Activated CD8-positive, alpha-beta T cell treated with anti-CD3 and anti-CD28 coated beads, Interleukin-2, amount 10 ng/mL, durations not matched to agents 7 days and 5 days (primary cell): ENCODE measurements at regions of chr16 and their contacts with region 1.

Region 1: DNA sequence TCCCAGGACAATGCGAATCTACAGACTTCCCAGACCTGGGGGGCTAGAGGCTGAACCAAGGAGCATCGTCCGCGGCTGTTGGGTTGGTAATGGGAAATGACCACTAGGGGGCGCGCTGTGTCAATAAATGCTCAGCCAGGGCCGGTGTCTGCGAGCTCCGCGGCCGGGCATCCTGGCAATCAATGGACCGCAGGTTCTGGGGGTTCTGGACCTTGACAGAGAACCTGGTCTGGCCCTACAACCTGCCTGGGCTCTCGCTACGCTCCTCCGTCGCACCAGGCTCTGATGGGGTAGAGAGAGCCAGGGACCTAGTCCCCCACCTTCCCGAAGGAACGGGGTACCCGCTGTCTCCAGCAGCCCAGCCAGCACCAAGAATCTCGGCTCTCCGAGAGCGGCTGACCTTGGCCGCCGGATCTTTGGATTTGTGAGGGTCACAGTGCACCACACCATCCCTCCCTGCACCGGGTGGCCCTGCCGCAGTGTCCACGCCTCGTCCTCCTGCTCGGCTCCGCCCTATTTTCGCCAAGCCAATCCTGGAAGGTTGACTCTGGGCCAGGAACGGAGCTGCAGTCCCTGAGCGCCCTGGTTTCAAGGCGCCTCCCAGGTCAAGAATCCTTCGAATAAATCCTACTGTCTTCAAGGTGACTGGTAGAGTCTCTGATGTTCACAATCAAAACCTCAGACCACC is 20.4 kb upstream of the BEAN1 start:
- DNase-seq: peak; percentile 93
- ATAC-seq: peak; percentile 94
- H3K4me3 Mint-ChIP-seq: peak overlapping the region; percentile 77
- H3K27ac Mint-ChIP-seq: peak overlapping the region; percentile 60
- H3K4me1 Mint-ChIP-seq: peaks cover 27% of the 10 kb centered on the region
- H3K27me3 Mint-ChIP-seq: peaks cover 18% of the 10 kb centered on the region

Region 2: GRCh38 chr16:66516808-66517585 is 110.3 kb after region 1 on chr16:
- CTCF ChIA-PET with region 1: interaction called, 13 read pairs
- POLR2A ChIA-PET with region 1: interaction called, 4 read pairs
- DNase-seq: peak; percentile 89
- ATAC-seq: peak; percentile 79
- H3K4me3 Mint-ChIP-seq: peak overlapping the region; percentile 74
- H3K27ac Mint-ChIP-seq: peak overlapping the region; percentile 94
- H3K4me1 Mint-ChIP-seq: peaks cover 74% of the 10 kb centered on the region
- H3K27me3 Mint-ChIP-seq: no peaks in the 10 kb centered on the region

Region 3: GRCh38 chr16:66562407-66562806 is 155.7 kb after region 1 on chr16:
- CTCF ChIA-PET with region 1: interaction called, 22 read pairs
- POLR2A ChIA-PET with region 1: no interaction called
- DNase-seq: no peak
- ATAC-seq: no peak
- H3K4me3 Mint-ChIP-seq: no peak overlapping the region
- H3K27ac Mint-ChIP-seq: no peak overlapping the region
- H3K4me1 Mint-ChIP-seq: peaks cover 65% of the 10 kb centered on the region
- H3K27me3 Mint-ChIP-seq: no peaks in the 10 kb centered on the region

Region 4: DNA sequence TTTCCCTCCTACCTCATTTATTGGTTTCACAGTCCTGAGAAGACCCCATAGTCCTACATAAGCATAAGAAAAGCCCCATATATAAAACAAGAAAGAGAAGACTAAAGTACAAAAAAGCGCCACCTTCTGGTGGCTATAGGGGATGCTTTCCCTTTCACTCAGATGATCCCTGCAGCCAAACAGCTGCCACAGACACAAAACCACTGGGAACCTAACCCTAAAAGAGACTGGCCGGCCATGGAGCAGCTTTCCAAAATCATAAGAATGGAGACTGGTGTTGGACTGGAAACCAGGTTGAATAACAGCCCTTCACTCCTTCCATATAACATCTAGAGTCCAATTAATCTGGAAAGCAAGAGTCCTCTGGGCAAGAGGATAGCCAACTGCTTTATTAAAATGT is 333.3 kb after region 1 on chr16:
- CTCF ChIA-PET with region 1: interaction called, 10 read pairs
- POLR2A ChIA-PET with region 1: no interaction called
- DNase-seq: peak; percentile 56
- ATAC-seq: peak; percentile 73
- H3K4me3 Mint-ChIP-seq: no peak overlapping the region
- H3K27ac Mint-ChIP-seq: peak overlapping the region; percentile 9
- H3K4me1 Mint-ChIP-seq: peaks cover 27% of the 10 kb centered on the region
- H3K27me3 Mint-ChIP-seq: no peaks in the 10 kb centered on the region